Thyroid gland (tissue), 4 donors: ENCODE measurements at regions of chr16 and their contacts with region 1.

Region 1: GRCh38 chr16:53041320-53042051 is 11.2 kb downstream of the CHD9NB start:
- DNase-seq: no peak
- H3K4me3 ChIP-seq: no peak overlapping the region
- H3K27ac ChIP-seq: peak overlapping the region in 2 of 3 donors; percentile 17 to 43
- H3K4me1 ChIP-seq: peaks cover 0 to 20% of the 10 kb centered on the region in 2 donors
- H3K27me3 ChIP-seq: no peaks in the 10 kb centered on the region
- CTCF ChIP-seq: no peak
- POLR2A ChIP-seq: no peak

Region 2: GRCh38 chr16:52705122-52705521 is 336.4 kb before region 1 on chr16:
- intact Hi-C with region 1: no loop called
- DNase-seq: no peak
- H3K4me3 ChIP-seq: no peak overlapping the region
- H3K27ac ChIP-seq: no peak overlapping the region
- H3K4me1 ChIP-seq: no peaks in the 10 kb centered on the region
- H3K27me3 ChIP-seq: no peaks in the 10 kb centered on the region
- CTCF ChIP-seq: no peak
- POLR2A ChIP-seq: no peak

Region 3: DNA sequence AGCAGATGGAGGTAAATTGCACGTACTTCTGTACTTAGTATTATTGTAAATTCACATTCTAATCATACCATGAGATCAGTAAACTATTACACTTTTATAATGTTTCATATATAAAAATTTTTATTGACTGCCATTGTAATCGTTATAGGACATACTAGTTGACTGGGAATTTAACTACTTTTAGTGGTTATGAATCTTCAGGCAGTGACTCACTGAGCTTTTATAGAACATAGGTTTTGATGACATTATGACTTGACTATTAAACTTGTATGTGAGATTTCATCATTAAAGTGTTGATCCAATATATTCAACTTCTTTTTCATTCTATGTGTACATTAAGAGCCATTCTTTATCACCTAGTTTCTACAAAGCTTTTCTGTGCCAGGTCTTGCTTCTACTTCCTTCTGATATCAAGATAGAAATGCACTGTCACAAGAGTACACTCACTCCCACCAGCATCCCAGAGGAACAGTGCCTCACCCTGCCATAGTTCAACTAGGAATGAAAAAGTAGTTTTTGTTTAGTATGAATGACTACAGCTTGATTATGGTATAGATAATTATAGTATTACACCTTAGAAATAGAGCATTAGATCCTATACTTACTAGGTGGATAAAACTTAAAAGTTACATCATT is 250.4 kb after region 1 on chr16:
- intact Hi-C with region 1: loop called (anchors 10 kb)
- DNase-seq: no peak
- H3K4me3 ChIP-seq: no peak overlapping the region
- H3K27ac ChIP-seq: no peak overlapping the region
- H3K4me1 ChIP-seq: no peaks in the 10 kb centered on the region
- H3K27me3 ChIP-seq: no peaks in the 10 kb centered on the region
- CTCF ChIP-seq: no peak
- POLR2A ChIP-seq: no peak